ENCODE measurements at regions of chr18 and their contacts with region 1.

Region 1: GRCh38 chr18:76803814-76804213 is 18.5 kb upstream of the ZNF236 start:
- DNase-seq: peak; percentile 71
- CTCF ChIP-seq: peak; percentile 88

Region 2: GRCh38 chr18:76791106-76791505 is 12.7 kb before region 1 on chr18:
- CTCF ChIA-PET with region 1: interaction called, 51 read pairs
- POLR2A ChIA-PET with region 1: no interaction called
- DNase-seq: no peak
- CTCF ChIP-seq: no peak

Region 3: GRCh38 chr18:76860411-76860810 is 56.6 kb after region 1 on chr18:
- CTCF ChIA-PET with region 1: interaction called, 16 read pairs
- POLR2A ChIA-PET with region 1: interaction called, 4 read pairs
- DNase-seq: no peak
- CTCF ChIP-seq: no peak

Region 4: DNA sequence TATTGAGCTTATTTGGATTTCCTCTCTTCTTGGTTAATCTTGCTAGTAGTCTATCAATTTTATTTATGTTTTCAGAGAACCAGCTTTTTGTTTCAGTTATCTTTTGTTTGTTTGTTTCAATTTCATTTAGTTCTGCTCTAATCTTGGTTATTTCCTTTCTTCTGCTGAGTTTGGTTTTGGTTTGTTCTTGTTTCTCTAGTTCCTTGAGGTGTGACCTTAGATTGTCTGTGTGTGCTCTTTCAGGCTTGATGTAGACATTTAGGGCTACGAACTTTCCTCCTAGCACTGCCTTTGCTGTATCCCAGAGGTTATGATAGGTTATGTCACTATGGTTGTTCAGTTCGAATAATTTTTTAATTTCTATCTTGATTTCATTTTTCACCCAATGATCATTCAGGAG is 160.1 kb after region 1 on chr18:
- CTCF ChIA-PET with region 1: interaction called, 15 read pairs
- POLR2A ChIA-PET with region 1: no interaction called
- DNase-seq: no peak
- CTCF ChIP-seq: no peak

Region 5: GRCh38 chr18:77054606-77055428 is 251.0 kb after region 1 on chr18:
- CTCF ChIA-PET with region 1: interaction called, 14 read pairs
- POLR2A ChIA-PET with region 1: no interaction called
- DNase-seq: peak; percentile 84
- CTCF ChIP-seq: peak; percentile 89

Region 6: DNA sequence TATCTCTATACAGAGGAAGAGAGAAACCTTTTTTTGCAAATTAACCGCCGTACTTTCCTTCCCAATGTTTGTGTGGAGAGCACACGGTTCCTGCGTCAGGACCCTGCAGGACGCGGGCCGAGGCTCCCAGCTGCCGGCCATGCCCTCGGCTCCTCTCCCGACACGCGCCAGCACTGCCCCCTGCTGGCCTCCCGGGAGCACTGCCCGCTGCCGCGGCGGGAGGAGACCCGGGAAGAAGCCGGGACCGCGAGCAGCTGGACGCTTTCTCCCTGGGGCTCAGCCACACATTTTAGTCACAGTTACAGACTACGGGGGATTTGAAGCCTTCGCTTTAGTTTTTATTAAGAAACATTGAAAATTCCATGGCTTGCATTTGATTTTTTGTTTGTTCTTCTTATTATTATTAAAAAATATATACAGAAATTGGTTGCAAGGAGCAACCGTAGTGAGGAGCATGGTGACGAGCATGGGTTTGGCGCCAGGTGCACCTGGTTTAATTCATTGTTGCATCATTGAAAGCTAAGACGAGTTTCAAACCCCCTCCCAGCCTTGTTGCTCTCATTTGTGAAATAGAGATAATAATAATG is 847.1 kb after region 1 on chr18:
- CTCF ChIA-PET with region 1: interaction called, 24 read pairs
- POLR2A ChIA-PET with region 1: no interaction called
- DNase-seq: peak; percentile 80
- CTCF ChIP-seq: peak; percentile 89

Measured in GM10248 (cell line).